ENCODE measurements at regions of chr18 and their contacts with region 1.

Region 1: DNA sequence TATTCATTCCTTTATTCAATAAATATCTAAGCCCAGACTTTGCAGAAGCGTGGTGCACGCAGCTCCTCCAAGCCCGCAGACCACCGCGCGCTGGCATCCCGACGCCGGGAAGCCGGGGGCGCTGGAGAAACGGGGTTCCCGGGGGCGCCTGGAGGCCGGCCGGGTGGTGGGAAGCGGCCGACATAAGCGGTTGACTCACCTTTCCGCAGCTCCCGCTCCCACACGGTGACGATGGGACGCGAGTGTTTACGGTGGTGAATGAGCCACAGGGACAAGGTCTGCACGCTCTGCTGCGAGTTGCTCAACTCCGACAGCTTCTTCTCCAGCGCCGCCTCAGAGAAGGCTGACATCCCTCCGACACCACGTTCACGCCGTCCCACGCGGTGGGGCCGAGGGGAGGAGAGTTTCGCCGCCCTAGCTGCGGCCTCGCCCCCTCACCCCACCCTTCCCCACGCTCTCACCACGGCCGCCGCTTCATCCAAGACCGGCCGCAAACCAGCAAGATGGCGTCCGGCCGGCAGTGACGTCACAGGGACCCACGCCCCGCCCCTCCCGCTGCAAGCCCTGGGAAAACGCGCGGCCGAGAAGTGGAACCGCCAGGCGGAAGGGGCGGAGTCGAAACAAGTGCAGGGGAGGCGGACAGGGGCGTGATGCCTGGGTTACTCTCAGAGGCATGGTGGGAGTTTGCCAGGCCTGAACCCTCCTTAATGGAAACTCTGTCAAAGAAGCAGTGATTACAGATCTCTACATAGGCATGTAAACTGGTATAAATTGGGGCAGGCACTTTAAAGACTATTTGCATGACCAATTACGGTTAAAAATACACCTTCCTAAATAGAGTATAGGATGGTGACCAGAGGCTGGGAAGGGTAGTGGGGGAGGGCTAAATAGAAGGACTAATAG is at the start of gene RPRD1A:
- DNase-seq: peak; percentile 90 to 98 (median 94)
- ATAC-seq: peak; percentile 96
- H3K4me3 ChIP-seq: peak within 1 kb of the TSS; percentile 88
- H3K4me3 Mint-ChIP-seq: peak within 1 kb of the TSS; percentile 92 to 98 (median 96)
- H3K27ac ChIP-seq: peak within 1 kb of the TSS; percentile 79
- H3K27ac Mint-ChIP-seq: peak within 1 kb of the TSS; percentile 85 to 97 (median 94)
- H3K4me1 ChIP-seq: peaks cover 11 to 16% of the 10 kb centered on the region in 2 donors
- H3K4me1 Mint-ChIP-seq: peaks cover 26 to 50% (median 44%) of the 10 kb centered on the region in 7 donors
- H3K27me3 ChIP-seq: no peaks in the 10 kb centered on the region
- H3K27me3 Mint-ChIP-seq: peaks cover 0 to 5% (median 0%) of the 10 kb centered on the region in 5 donors
- total RNA-seq, gene RPRD1A: 22.6 to 51.3 (median 28.7) TPM

Region 2: GRCh38 chr18:34976899-34977837 is 1090.1 kb before region 1 on chr18:
- CTCF ChIA-PET with region 1: no interaction called
- POLR2A ChIA-PET with region 1: no interaction called
- intact Hi-C with region 1: loop called in 1 of 2 experiments (anchors 5 kb)
- DNase-seq: peak; percentile 60 to 78 (median 72)
- ATAC-seq: peak; percentile 84
- H3K4me3 ChIP-seq: peak overlapping the region; percentile 74
- H3K4me3 Mint-ChIP-seq: peak overlapping the region; percentile 89 to 99 (median 94)
- H3K27ac ChIP-seq: peak overlapping the region; percentile 54
- H3K27ac Mint-ChIP-seq: peak overlapping the region in 6 of 9 donors; percentile 24 to 72 (median 39)
- H3K4me1 ChIP-seq: no peaks in the 10 kb centered on the region
- H3K4me1 Mint-ChIP-seq: peaks cover 18 to 37% (median 24%) of the 10 kb centered on the region in 7 donors
- H3K27me3 ChIP-seq: peaks cover 0 to 3% of the 10 kb centered on the region in 2 donors
- H3K27me3 Mint-ChIP-seq: peaks cover 0 to 66% (median 0%) of the 10 kb centered on the region in 5 donors

Region 3: DNA sequence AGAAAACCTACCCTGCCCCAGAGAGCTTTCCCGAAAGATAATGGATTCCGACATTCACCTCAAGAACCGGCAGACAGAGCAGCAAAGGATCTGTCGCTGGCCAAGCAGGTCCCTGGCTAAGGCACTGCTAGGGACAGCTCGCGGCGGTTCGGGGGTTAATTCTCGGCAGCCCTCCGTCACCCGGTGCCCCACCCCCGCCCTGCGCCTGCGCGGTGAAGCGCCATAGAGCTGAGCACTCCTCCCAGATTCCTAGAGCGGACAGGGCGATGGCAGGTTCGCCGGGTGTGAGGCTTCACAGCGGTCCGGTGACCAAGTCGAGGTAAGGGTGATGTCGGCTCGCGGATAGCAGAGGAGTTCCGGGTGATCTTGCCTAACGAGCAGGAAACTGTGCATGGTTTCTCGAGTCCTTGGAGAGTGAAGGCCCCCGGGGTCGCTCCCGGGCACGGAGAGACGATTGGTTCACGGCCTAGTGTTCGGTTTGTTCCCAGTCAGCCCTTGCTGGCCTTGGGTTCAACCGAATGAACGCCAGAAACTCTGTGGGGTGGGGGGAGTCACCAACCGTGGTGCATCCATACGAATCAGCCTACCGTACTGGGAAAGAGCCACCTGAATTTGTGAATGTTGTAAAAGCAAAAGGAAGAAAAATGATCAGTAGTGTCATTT is 777.1 kb before region 1 on chr18 and contains the start of gene ZSCAN30:
- CTCF ChIA-PET with region 1: no interaction called
- POLR2A ChIA-PET with region 1: no interaction called
- intact Hi-C with region 1: loop called in 1 of 2 experiments (anchors 2 kb)
- DNase-seq: peak; percentile 90 to 96 (median 94)
- ATAC-seq: peak; percentile 99
- H3K4me3 ChIP-seq: peak within 1 kb of the TSS; percentile 90
- H3K4me3 Mint-ChIP-seq: peak within 1 kb of the TSS; percentile 97 to 99 (median 98)
- H3K27ac ChIP-seq: peak within 1 kb of the TSS; percentile 86
- H3K27ac Mint-ChIP-seq: peak within 1 kb of the TSS; percentile 94 to 100 (median 98)
- H3K4me1 ChIP-seq: peaks cover 16 to 18% of the 10 kb centered on the region in 2 donors
- H3K4me1 Mint-ChIP-seq: peaks cover 29 to 86% (median 75%) of the 10 kb centered on the region in 7 donors
- H3K27me3 ChIP-seq: no peaks in the 10 kb centered on the region
- H3K27me3 Mint-ChIP-seq: no peaks in the 10 kb centered on the region
- total RNA-seq, gene ZSCAN30: 14.0 to 23.2 (median 20.8) TPM

Region 4: GRCh38 chr18:35616664-35617423 is 450.5 kb before region 1 on chr18:
- CTCF ChIA-PET with region 1: no interaction called
- POLR2A ChIA-PET with region 1: no interaction called
- intact Hi-C with region 1: loop called in 1 of 2 experiments (anchors 5 kb)
- DNase-seq: peak in 8 of 9 donors; percentile 44 to 74 (median 69)
- ATAC-seq: peak; percentile 95
- H3K4me3 ChIP-seq: peak overlapping the region; percentile 43
- H3K4me3 Mint-ChIP-seq: no peak overlapping the region
- H3K27ac ChIP-seq: peak overlapping the region; percentile 70
- H3K27ac Mint-ChIP-seq: no peak overlapping the region
- H3K4me1 ChIP-seq: peaks cover 7 to 16% of the 10 kb centered on the region in 2 donors
- H3K4me1 Mint-ChIP-seq: peaks cover 7 to 25% (median 14%) of the 10 kb centered on the region in 7 donors
- H3K27me3 ChIP-seq: no peaks in the 10 kb centered on the region
- H3K27me3 Mint-ChIP-seq: no peaks in the 10 kb centered on the region

Region 5: GRCh38 chr18:36035253-36035652 is 32.1 kb before region 1 on chr18:
- CTCF ChIA-PET with region 1: no interaction called
- POLR2A ChIA-PET with region 1: no interaction called
- intact Hi-C with region 1: loop called in 1 of 2 experiments (anchors 1 kb)
- DNase-seq: no peak
- ATAC-seq: no peak
- H3K4me3 ChIP-seq: no peak overlapping the region
- H3K4me3 Mint-ChIP-seq: peak overlapping the region in 1 of 10 donors; percentile 32
- H3K27ac ChIP-seq: no peak overlapping the region
- H3K27ac Mint-ChIP-seq: peak overlapping the region in 5 of 9 donors; percentile 3 to 79 (median 23)
- H3K4me1 ChIP-seq: peaks cover 0 to 7% of the 10 kb centered on the region in 2 donors
- H3K4me1 Mint-ChIP-seq: peaks cover 24 to 60% (median 55%) of the 10 kb centered on the region in 7 donors
- H3K27me3 ChIP-seq: no peaks in the 10 kb centered on the region
- H3K27me3 Mint-ChIP-seq: no peaks in the 10 kb centered on the region

Region 6: GRCh38 chr18:36078751-36079529 is 11.6 kb after region 1 on chr18:
- CTCF ChIA-PET with region 1: no interaction called
- POLR2A ChIA-PET with region 1: no interaction called
- intact Hi-C with region 1: no loop called
- DNase-seq: no peak
- ATAC-seq: no peak
- H3K4me3 ChIP-seq: no peak overlapping the region
- H3K4me3 Mint-ChIP-seq: no peak overlapping the region
- H3K27ac ChIP-seq: no peak overlapping the region
- H3K27ac Mint-ChIP-seq: peak overlapping the region in 1 of 9 donors; percentile 16
- H3K4me1 ChIP-seq: no peaks in the 10 kb centered on the region
- H3K4me1 Mint-ChIP-seq: peaks cover 0 to 2% (median 0%) of the 10 kb centered on the region in 7 donors
- H3K27me3 ChIP-seq: no peaks in the 10 kb centered on the region
- H3K27me3 Mint-ChIP-seq: peaks cover 5 to 15% (median 11%) of the 10 kb centered on the region in 5 donors

Region 7: DNA sequence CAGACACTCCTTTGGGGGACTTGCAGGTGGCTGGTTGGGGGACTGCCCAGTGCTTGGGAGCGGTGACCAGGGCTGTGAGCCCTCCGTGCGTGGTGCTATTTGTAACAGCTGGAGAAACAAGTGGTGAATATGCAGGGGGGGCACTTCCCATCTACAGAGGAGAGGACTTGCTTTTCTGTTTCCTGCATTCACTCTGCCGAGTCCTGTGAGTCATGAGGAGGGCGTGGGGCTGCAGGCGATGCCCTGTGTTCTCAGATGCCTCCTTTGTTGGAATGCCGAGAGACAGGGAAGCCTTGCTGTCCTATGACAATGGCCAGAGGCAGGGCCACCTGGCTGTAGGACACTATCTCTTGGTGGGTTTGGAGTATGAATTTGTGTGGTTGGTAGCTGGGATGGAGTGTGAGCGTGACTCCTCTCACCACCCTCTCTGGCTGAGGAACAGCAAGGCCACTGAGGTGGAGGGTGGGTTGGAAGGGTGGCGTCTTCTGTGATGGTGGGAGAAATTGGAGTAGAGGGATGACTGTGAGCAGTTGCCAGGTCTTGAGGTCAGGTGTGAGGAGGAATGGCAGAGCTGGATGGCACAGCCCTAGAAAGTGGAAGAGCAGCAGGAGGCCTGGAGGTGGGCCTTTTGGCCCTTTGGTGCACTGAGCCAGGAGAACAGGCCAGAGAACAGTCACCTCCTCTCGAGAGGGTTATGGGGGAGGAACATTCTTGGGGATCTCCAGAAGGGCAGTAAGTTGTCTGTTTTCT is 254.5 kb after region 1 on chr18:
- CTCF ChIA-PET with region 1: no interaction called
- POLR2A ChIA-PET with region 1: no interaction called
- intact Hi-C with region 1: no loop called
- DNase-seq: no peak
- ATAC-seq: no peak
- H3K4me3 ChIP-seq: no peak overlapping the region
- H3K4me3 Mint-ChIP-seq: no peak overlapping the region
- H3K27ac ChIP-seq: no peak overlapping the region
- H3K27ac Mint-ChIP-seq: no peak overlapping the region
- H3K4me1 ChIP-seq: no peaks in the 10 kb centered on the region
- H3K4me1 Mint-ChIP-seq: no peaks in the 10 kb centered on the region
- H3K27me3 ChIP-seq: no peaks in the 10 kb centered on the region
- H3K27me3 Mint-ChIP-seq: peaks cover 4 to 37% (median 33%) of the 10 kb centered on the region in 5 donors

Region 8: GRCh38 chr18:36828630-36829361 is 761.5 kb after region 1 on chr18 and contains the starts of genes KIAA1328 and TPGS2:
- CTCF ChIA-PET with region 1: no interaction called
- POLR2A ChIA-PET with region 1: no interaction called
- intact Hi-C with region 1: loop called (anchors 1 kb)
- DNase-seq: peak; percentile 77 to 90 (median 87)
- ATAC-seq: peak; percentile 96
- H3K4me3 ChIP-seq: peak within 1 kb of the TSS; percentile 79
- H3K4me3 Mint-ChIP-seq: peak within 1 kb of the TSS; percentile 73 to 98 (median 92)
- H3K27ac ChIP-seq: peak within 1 kb of the TSS; percentile 75
- H3K27ac Mint-ChIP-seq: peak within 1 kb of the TSS; percentile 57 to 98 (median 90)
- H3K4me1 ChIP-seq: peaks cover 15 to 18% of the 10 kb centered on the region in 2 donors
- H3K4me1 Mint-ChIP-seq: peaks cover 27 to 60% (median 47%) of the 10 kb centered on the region in 7 donors
- H3K27me3 ChIP-seq: no peaks in the 10 kb centered on the region
- H3K27me3 Mint-ChIP-seq: no peaks in the 10 kb centered on the region
- total RNA-seq, gene KIAA1328: 8.1 to 17.6 (median 16.0) TPM
- total RNA-seq, gene TPGS2: 16.9 to 92.8 (median 53.5) TPM